Head of caudate nucleus (tissue), 42 donors: ENCODE measurements at regions of chr22 and their contacts with region 1.

Region 1: DNA sequence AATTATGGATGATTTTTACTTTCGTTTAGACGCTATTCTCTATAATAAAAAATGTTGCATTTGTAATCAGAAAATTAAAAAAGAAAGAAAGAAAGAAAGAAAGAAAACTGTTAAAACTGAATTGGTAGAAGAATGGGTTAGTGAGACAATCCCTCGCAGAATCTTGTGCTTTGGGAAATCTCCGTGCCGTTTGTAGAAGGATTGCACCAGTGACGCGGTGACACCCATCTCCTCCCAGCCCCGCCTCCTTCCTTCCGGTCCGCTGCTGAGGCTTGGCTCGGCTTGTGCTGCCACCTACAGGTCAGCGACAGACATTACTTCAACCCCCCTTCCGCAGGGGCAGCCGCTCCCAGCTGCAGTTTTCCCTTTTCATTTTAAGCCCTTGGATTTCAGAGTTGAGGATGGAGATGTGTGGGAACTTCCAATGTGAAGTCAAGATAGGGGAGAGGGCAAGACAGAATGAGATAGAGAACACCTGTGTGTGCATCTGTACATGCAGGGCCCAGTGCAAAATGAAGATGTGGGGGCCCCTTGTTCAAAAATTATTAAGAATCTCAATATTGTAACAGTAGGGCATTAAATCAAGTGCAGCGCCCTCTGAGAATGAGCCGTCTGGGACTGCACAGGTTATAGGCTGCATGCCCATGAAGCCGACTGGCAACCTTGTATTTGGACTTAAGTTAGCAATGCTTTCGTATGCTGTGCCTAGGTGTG is 41.1 kb downstream of the TST start:
- DNase-seq: peak; percentile 84 to 96 (median 93)

Region 2: GRCh38 chr22:36781656-36782627 is 196.2 kb before region 1 on chr22:
- intact Hi-C with region 1: loop called (anchors 5 kb)
- DNase-seq: peak; percentile 57 to 93 (median 82)